ENCODE measurements at regions of chrX and their contacts with region 1.

Region 1: DNA sequence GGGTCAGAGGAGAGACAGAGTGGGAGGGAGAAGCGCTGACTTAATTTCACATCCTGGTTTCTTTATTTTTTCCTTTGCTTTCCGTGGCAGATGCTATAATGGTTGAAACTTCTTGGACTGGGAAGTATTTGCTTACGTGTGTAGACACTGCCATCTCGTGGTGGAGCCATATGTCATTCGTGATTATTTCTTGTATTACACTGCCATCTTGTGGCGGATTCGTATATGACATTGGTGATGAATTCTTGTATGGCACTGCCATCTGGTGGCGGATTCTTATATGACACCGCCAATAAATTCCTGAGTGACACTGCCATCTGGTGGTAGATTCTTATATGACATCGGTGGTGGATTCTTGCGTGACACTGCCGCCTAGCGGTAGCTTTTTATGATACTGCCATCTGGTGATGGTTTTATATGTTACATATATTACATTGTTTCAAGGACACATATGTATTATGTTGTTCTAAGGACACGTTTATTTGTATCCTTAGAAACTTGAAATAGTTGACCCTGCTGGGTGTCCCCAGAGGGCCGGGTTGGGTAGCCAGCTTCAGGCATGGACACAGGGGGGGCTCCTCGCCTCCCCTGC is 37.3 kb upstream of the CLCN4 start:
- DNase-seq: peak; percentile 72
- H3K4me3 Mint-ChIP-seq: no peak overlapping the region
- H3K27ac Mint-ChIP-seq: peak overlapping the region; percentile 71
- H3K4me1 Mint-ChIP-seq: peaks cover 19% of the 10 kb centered on the region
- H3K27me3 Mint-ChIP-seq: no peaks in the 10 kb centered on the region

Region 2: GRCh38 chrX:8743126-8743732 is 1376.3 kb before region 1 on chrX:
- CTCF ChIA-PET with region 1: interaction called, 3 read pairs
- POLR2A ChIA-PET with region 1: no interaction called
- intact Hi-C with region 1: loop called (anchors 10 kb)
- DNase-seq: peak; percentile 61
- H3K4me3 Mint-ChIP-seq: no peak overlapping the region
- H3K27ac Mint-ChIP-seq: no peak overlapping the region
- H3K4me1 Mint-ChIP-seq: no peaks in the 10 kb centered on the region
- H3K27me3 Mint-ChIP-seq: peaks cover 1% of the 10 kb centered on the region

Region 3: DNA sequence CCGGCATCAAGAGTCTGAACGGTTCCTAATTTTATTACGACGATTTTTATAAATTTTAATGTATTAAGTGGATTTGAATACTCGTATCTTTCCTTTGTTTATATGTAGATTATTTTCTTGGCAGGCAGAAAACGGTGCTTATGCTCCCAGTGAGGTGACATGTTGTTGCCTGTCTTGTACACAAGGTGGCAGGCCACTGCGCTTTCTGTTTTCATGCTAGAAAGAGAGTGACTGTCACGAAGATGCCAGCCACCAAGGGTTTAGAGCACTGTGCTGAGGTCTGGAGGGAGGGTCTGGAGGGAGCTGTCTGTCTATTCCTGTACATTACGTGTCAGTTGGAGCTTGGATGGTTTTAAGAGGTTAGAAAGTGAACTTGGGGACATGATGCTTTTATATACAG is 245.5 kb before region 1 on chrX:
- CTCF ChIA-PET with region 1: interaction called, 15 read pairs
- POLR2A ChIA-PET with region 1: no interaction called
- intact Hi-C with region 1: loop called (anchors 1 kb)
- DNase-seq: peak; percentile 48
- H3K4me3 Mint-ChIP-seq: no peak overlapping the region
- H3K27ac Mint-ChIP-seq: no peak overlapping the region
- H3K4me1 Mint-ChIP-seq: peaks cover 7% of the 10 kb centered on the region
- H3K27me3 Mint-ChIP-seq: peaks cover 17% of the 10 kb centered on the region

Region 4: DNA sequence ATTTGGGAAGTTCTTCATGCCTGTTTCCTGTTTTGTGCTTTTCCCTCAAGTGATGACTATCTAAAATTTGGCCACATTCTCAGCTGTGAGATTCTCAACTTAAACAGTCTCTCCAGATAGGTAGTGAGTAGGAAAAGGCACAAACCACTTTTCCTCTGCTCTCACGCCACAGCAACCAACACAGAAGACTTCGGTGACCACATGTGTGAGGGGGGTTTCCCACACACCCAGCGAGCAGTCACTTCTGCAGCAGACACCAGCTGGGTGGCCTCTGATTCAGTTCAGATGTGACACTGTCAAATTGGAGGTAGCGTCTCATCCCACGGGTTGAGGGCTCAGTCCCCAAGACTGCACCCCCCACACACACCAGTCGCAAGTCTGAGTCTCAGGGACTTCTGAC is 177.4 kb before region 1 on chrX:
- CTCF ChIA-PET with region 1: interaction called, 4 read pairs
- POLR2A ChIA-PET with region 1: no interaction called
- intact Hi-C with region 1: loop called (anchors 1 kb)
- DNase-seq: peak; percentile 83
- H3K4me3 Mint-ChIP-seq: no peak overlapping the region
- H3K27ac Mint-ChIP-seq: peak overlapping the region; percentile 57
- H3K4me1 Mint-ChIP-seq: peaks cover 14% of the 10 kb centered on the region
- H3K27me3 Mint-ChIP-seq: peaks cover 19% of the 10 kb centered on the region

Region 5: GRCh38 chrX:9988762-9989161 is 130.7 kb before region 1 on chrX:
- CTCF ChIA-PET with region 1: interaction called, 121 read pairs
- POLR2A ChIA-PET with region 1: no interaction called
- intact Hi-C with region 1: loop called (anchors 1 kb)
- DNase-seq: no peak
- H3K4me3 Mint-ChIP-seq: no peak overlapping the region
- H3K27ac Mint-ChIP-seq: no peak overlapping the region
- H3K4me1 Mint-ChIP-seq: no peaks in the 10 kb centered on the region
- H3K27me3 Mint-ChIP-seq: no peaks in the 10 kb centered on the region

Region 6: DNA sequence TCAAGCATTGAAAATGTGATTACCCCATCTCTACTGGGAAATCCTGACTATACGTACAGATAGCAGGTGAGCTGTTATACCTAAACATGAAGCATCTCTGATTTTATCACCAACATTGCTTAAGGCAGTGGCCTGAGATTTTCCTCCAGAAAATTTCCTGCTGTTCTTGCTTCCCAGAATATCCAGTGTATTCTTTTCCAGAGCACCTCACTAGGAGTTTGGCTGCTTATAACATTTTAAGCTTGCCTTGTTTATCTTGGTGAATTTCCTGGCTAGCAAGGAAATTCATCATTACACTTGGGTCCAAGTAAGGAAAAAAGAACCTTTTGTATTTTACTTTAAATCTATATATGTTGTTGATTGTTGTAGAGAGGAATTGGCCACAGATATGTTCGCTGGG is 35.7 kb before region 1 on chrX:
- CTCF ChIA-PET with region 1: interaction called, 10 read pairs
- POLR2A ChIA-PET with region 1: no interaction called
- intact Hi-C with region 1: loop called (anchors 2 kb)
- DNase-seq: no peak
- H3K4me3 Mint-ChIP-seq: no peak overlapping the region
- H3K27ac Mint-ChIP-seq: no peak overlapping the region
- H3K4me1 Mint-ChIP-seq: peaks cover 48% of the 10 kb centered on the region
- H3K27me3 Mint-ChIP-seq: no peaks in the 10 kb centered on the region

Measured in activated CD4-positive, alpha-beta memory T cell treated with anti-CD3 and anti-CD28 coated beads for 36 hours (primary cell).